HCT116 (cell line): ENCODE measurements at regions of chr2 and their contacts with region 1.

Region 1: GRCh38 chr2:43595603-43596412 is at the start of gene THADA:
- DNase-seq: peak; percentile 99
- ATAC-seq: peak; percentile 96
- H3K4me3 ChIP-seq: peak within 1 kb of the TSS; percentile 79 to 81
- H3K27ac ChIP-seq: peak within 1 kb of the TSS; percentile 86
- H3K4me1 ChIP-seq: peaks cover 5 to 12% of the 10 kb centered on the region in 2 experiments; a peak in 3 of 4 replicates
- H3K27me3 ChIP-seq: no peaks in the 10 kb centered on the region
- CTCF ChIP-seq: no peak
- POLR2A ChIP-seq: peak; percentile 97
- RAD21 ChIP-seq: no peak
- total RNA-seq, gene THADA: 30.7 TPM

Region 2: GRCh38 chr2:43585708-43586107 is 10.1 kb before region 1 on chr2:
- CTCF ChIA-PET with region 1: no interaction called
- POLR2A ChIA-PET with region 1: interaction called, 17 read pairs
- RAD21 ChIA-PET with region 1: no interaction called
- intact Hi-C with region 1: no loop called
- DNase-seq: no peak
- ATAC-seq: no peak
- H3K4me3 ChIP-seq: no peak overlapping the region
- H3K27ac ChIP-seq: no peak overlapping the region
- H3K4me1 ChIP-seq: no peaks in the 10 kb centered on the region
- H3K27me3 ChIP-seq: no peaks in the 10 kb centered on the region
- CTCF ChIP-seq: no peak
- POLR2A ChIP-seq: no peak
- RAD21 ChIP-seq: no peak

Region 3: GRCh38 chr2:43853141-43854081 is 257.6 kb after region 1 on chr2:
- CTCF ChIA-PET with region 1: no interaction called
- POLR2A ChIA-PET with region 1: no interaction called
- RAD21 ChIA-PET with region 1: no interaction called
- intact Hi-C with region 1: no loop called
- DNase-seq: no peak
- ATAC-seq: no peak
- H3K4me3 ChIP-seq: no peak overlapping the region
- H3K27ac ChIP-seq: no peak overlapping the region
- H3K4me1 ChIP-seq: peaks cover 0 to under 1% of the 10 kb centered on the region in 2 experiments; a peak in 1 of 4 replicates
- H3K27me3 ChIP-seq: peaks cover 40% of the 10 kb centered on the region
- CTCF ChIP-seq: no peak
- POLR2A ChIP-seq: no peak
- RAD21 ChIP-seq: no peak